BJ (cell line): ENCODE measurements at regions of chr6 and their contacts with region 1.

Region 1: DNA sequence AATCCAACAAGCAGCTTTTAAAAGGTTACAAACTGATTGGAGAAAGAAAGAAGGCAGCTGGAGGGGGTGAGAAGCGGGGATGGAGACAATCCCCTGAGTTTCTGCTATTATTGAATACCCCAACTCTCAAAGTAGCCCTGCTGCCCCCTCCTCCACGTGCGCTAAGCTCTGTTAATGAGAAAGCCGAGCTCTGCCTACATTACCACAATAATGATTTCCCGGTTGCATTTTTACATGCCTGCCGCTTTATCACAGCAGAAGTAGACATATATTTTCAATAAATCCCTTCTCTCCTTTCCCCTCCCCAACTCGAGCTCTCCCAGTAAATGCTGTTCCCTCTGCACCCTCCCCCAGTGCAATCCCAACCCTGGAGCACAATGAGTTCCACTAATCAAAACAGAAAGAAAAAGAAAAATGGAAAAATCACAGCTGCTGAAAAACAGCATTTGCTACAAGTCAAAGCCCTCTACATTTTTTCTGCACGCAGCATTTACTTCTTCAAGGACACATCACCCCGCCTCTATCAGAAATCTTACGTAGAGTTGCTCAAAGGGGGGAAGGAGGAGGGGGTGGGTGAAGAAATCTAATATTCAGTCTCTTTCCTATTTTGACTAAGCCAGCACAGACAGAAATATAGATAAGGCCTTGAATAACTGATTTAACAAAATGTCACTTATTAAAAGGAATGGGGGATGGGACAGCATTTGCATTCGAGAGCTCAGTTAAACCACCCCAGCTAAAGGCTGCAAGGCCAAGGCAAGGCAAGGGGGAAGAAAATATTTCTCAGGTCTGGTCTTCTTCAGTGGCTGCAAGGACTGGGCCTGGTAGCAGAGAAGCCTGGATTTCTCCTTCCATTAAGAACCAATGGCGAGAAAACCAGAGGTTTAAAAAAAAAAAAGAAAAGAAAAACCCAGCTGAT is 10.7 kb downstream of the TRERF1 start:
- DNase-seq: no peak
- H3K4me3 ChIP-seq: no peak overlapping the region
- H3K27me3 ChIP-seq: no peaks in the 10 kb centered on the region
- CTCF ChIP-seq: no peak

Region 2: DNA sequence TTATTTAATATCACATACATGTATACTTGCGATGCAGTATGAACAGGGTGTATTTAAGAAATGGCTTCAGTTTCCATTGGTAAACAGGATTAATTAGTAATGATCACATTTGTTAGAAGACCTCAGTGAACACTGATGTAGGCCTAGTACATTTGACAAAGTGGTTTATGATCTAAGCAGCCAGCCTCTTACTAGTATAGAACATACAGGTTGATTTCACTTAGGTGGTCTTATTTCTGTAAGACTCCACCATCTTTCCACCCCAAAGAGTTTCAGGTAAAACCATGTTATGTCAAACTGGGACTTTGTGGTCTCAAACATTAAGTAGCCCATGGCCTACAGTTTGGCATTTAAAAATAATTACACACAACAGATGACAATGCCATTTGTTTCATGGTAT is 203.2 kb before region 1 on chr6:
- CTCF ChIA-PET with region 1: no interaction called
- POLR2A ChIA-PET with region 1: interaction called, 17 read pairs
- DNase-seq: no peak
- H3K4me3 ChIP-seq: no peak overlapping the region
- H3K27me3 ChIP-seq: no peaks in the 10 kb centered on the region
- CTCF ChIP-seq: no peak